ENCODE measurements at regions of chr12 and their contacts with region 1.

Region 1: DNA sequence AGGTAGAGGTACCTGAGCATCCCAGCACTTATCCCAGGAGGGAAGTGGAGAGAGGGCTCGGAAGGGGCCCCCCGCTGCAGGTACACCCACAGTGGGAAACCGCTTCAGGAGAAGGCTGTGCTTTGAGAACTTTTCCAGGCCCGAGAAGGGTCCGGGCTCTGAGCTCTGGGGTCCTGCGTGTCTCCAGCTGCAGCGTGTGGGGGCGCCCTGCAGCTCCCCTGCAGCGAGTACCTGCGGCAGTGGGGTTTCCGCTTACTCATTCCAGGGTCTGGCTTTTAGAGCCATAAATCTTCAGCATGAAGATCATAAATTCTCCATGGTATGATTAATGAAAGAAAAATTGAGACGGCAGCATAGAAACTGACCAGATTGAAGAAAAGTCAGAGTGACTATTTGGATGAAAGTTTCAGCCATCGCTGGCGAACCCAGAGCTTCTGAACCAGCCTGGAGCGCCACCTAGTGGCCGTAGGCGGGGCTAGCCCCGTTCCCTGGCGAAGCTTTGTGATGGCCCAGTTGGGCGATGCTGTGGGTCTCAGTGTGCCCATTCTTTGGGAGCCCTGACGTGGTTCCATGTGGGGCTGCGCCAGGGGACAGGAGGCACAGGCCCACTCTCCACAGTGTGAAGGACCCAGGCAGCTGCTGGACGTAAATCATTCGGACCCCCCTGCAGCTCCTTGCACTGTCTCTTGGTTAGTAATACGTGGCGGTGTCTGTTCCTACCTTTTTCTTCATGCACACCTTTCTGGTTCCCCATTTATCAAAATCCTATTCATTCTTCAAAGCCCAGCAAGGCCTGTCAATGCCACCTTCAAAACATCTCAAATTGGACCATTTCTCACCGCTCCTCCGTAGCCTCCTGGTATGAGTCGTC is 198.2 kb downstream of the TSPAN9 start:
- DNase-seq: peak; percentile 68
- H3K4me3 Mint-ChIP-seq: no peak overlapping the region
- H3K27ac Mint-ChIP-seq: no peak overlapping the region
- H3K4me1 Mint-ChIP-seq: peaks cover 17% of the 10 kb centered on the region
- H3K27me3 Mint-ChIP-seq: no peaks in the 10 kb centered on the region
- CTCF ChIP-seq: peak; percentile 95

Region 2: DNA sequence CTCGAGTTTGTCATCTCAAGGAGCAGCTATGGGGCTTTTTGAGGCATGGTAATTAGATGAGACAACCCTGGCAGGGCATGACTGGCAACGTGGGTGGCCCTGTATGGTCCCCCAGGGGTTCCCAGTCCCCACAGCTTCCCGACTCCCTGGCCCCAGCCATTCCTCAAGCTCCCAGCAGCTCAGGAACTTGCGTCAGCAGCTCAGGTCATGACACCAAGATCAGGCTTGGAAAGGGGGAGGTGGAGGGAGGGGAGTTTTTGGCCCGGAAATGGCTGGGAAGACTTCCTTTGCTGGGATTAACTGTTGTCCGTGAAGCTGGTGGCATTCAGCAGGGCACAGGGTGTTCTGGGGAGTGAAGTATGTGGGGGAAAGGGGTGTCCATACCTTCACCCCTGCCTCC is 430.1 kb before region 1 on chr12:
- CTCF ChIA-PET with region 1: no interaction called
- POLR2A ChIA-PET with region 1: no interaction called
- intact Hi-C with region 1: no loop called
- DNase-seq: no peak
- H3K4me3 Mint-ChIP-seq: no peak overlapping the region
- H3K27ac Mint-ChIP-seq: no peak overlapping the region
- H3K4me1 Mint-ChIP-seq: no peaks in the 10 kb centered on the region
- H3K27me3 Mint-ChIP-seq: no peaks in the 10 kb centered on the region
- CTCF ChIP-seq: no peak

Region 3: GRCh38 chr12:3145033-3145432 is 130.4 kb before region 1 on chr12:
- CTCF ChIA-PET with region 1: interaction called, 248 read pairs
- POLR2A ChIA-PET with region 1: no interaction called
- intact Hi-C with region 1: no loop called
- DNase-seq: no peak
- H3K4me3 Mint-ChIP-seq: no peak overlapping the region
- H3K27ac Mint-ChIP-seq: no peak overlapping the region
- H3K4me1 Mint-ChIP-seq: no peaks in the 10 kb centered on the region
- H3K27me3 Mint-ChIP-seq: no peaks in the 10 kb centered on the region
- CTCF ChIP-seq: no peak

Region 4: DNA sequence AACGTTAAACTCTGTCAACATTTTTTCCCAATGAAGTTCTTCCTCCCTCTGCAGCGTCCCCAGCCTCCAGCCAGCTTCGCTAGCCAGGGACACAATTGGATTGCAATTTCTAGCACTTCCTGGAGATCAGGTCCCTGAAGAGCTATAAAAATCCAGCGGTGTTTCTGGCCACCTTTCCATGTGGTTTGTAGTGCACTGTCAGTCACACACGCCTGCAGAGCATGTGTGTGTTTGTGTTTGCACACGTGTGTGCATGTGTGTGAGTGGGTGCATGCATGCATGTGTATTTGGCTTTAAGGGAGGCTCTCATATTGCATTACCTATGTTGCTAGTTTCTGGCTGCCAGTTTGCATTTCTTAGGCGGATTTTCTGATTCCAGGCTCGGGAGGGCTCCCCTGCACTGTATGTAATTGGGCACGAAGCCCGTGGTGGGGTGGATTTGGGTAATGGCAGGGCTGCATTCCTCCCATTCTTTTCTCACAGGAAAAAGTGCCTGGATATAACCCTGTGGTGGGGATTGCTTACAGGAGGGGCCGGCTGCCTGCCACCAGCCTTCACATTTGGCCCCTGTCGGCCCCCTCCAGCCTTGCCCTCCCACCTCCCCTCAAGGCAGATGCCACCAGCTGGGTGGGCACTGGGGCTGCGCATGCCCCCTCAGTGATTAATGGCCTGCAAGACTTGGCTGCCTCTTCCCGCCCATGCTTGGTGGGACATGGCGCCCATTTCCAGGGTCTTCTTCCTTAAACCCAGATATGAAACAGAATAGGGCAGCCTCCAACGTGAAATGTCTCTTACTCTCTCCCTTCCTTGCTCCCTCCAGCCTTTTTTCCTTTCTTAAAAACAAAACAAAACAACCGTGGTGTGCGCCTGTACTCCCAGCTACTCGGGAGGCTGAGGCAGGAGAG is 124.2 kb before region 1 on chr12:
- CTCF ChIA-PET with region 1: interaction called, 15 read pairs
- POLR2A ChIA-PET with region 1: no interaction called
- intact Hi-C with region 1: no loop called
- DNase-seq: no peak
- H3K4me3 Mint-ChIP-seq: no peak overlapping the region
- H3K27ac Mint-ChIP-seq: no peak overlapping the region
- H3K4me1 Mint-ChIP-seq: no peaks in the 10 kb centered on the region
- H3K27me3 Mint-ChIP-seq: no peaks in the 10 kb centered on the region
- CTCF ChIP-seq: no peak

Region 5: DNA sequence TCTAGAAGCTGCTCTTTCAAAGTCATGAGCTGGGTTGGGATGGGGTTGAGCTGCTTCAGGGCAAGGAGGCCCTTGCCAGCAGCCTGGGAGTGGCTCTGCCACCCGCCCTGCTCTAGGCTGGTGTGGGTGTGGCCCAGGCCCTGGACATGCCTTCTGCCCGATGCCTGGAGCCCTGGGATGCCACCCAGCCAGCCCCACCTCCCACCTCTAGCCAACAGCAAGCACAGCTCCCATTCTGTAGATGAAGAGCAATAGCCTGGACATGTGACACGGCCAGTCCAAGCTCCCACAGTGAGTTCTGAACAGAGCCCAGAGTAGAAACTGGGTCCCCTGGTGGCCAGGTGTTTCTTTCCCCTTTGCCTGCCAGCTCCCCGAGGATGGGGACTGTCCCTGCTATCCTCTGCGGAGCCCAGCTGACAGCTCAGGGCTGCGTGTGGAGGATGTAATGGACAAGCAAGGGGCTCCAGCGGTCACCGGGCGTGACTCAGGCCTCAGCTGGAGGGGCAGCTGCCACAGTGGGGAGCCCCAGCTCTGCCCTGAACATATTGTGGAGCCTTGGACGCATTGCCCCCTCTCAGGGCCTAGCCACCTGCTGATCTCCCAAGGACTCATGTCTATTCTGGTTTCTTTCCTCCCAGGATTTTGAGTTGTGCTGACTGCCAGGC is 33.1 kb before region 1 on chr12:
- CTCF ChIA-PET with region 1: interaction called, 11 read pairs
- POLR2A ChIA-PET with region 1: no interaction called
- intact Hi-C with region 1: no loop called
- DNase-seq: peak; percentile 14
- H3K4me3 Mint-ChIP-seq: no peak overlapping the region
- H3K27ac Mint-ChIP-seq: no peak overlapping the region
- H3K4me1 Mint-ChIP-seq: no peaks in the 10 kb centered on the region
- H3K27me3 Mint-ChIP-seq: no peaks in the 10 kb centered on the region
- CTCF ChIP-seq: no peak

Region 6: DNA sequence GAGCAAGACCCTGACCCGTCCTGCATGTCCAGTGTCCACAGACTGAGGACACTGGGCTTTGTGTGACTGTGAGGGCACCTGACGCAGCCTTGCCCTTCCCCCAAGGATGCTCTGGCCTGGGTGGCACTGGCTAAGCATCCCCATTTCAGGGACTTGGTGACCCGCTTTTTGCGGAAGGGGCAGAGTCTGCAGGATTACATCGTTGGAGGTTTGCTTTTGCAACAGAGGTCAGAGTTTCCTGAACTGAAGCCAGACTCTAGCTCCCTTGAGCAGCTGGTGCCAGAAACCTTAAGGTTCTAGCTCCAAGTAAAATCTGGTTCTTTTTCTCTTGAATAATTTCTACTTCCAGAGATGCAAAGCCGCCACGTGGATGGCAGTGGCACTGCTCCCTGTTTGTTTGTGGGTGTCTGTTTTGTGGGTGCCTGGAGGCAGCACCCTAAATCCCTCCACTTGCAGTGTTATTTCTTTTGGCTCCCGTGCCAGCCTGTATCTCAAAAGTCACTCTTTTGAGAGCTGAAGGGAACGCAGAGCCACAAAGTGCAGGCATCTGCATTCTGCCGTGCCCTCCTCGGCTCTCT is 13.5 kb before region 1 on chr12:
- CTCF ChIA-PET with region 1: interaction called, 28 read pairs
- POLR2A ChIA-PET with region 1: no interaction called
- intact Hi-C with region 1: no loop called
- DNase-seq: no peak
- H3K4me3 Mint-ChIP-seq: no peak overlapping the region
- H3K27ac Mint-ChIP-seq: no peak overlapping the region
- H3K4me1 Mint-ChIP-seq: no peaks in the 10 kb centered on the region
- H3K27me3 Mint-ChIP-seq: no peaks in the 10 kb centered on the region
- CTCF ChIP-seq: no peak

Region 7: GRCh38 chr12:3988519-3989448 is 713.4 kb after region 1 on chr12:
- CTCF ChIA-PET with region 1: no interaction called
- POLR2A ChIA-PET with region 1: no interaction called
- intact Hi-C with region 1: no loop called
- DNase-seq: no peak
- H3K4me3 Mint-ChIP-seq: no peak overlapping the region
- H3K27ac Mint-ChIP-seq: no peak overlapping the region
- H3K4me1 Mint-ChIP-seq: no peaks in the 10 kb centered on the region
- H3K27me3 Mint-ChIP-seq: peaks cover 34% of the 10 kb centered on the region
- CTCF ChIP-seq: no peak

Measured in MCF 10A (cell line).